Vagina (tissue), 2 donors: ENCODE measurements at regions of chr20 and their contacts with region 1.

Region 1: DNA sequence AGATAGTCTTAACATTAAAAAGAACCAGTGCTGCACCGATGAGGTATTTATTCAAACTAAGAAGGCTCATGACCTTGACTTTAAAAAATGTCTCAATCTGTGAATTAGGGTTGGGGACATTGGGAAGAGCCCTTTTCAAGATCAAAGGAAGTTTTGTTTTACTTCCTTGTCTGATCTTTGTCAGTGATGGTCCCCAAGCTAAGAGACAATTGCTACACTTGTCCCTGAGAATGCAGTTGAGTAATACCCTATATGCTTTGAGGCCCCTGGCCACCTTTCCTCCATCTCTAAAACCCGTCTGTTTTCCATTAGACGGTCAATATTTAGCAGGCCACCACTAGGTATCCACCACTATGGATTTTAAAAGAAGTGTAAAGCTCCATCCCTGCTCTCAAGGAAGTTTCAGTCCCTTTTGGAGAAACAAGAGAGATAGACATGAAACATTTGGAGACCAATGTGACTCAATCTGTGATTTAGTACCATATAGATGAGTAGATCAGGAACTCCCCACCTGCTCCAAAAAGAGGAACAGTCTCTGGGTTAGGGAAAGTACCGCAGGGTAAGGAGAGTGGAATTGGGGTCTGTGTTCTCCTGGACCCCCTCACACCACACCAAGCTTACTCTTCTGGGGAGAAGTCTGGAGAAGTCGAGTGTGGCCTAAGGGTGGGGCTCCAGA is 99.1 kb upstream of the ISM1 start:
- DNase-seq: peak in 1 of 2 donors; percentile 22
- H3K4me3 ChIP-seq: no peak overlapping the region
- H3K27ac ChIP-seq: no peak overlapping the region
- H3K4me1 ChIP-seq: no peaks in the 10 kb centered on the region
- H3K27me3 ChIP-seq: no peaks in the 10 kb centered on the region
- CTCF ChIP-seq: no peak
- POLR2A ChIP-seq: no peak

Region 2: GRCh38 chr20:13765299-13765698 is 643.3 kb after region 1 on chr20:
- intact Hi-C with region 1: loop called (anchors 10 kb)
- DNase-seq: no peak
- H3K4me3 ChIP-seq: no peak overlapping the region
- H3K27ac ChIP-seq: no peak overlapping the region
- H3K4me1 ChIP-seq: no peaks in the 10 kb centered on the region
- H3K27me3 ChIP-seq: no peaks in the 10 kb centered on the region
- CTCF ChIP-seq: no peak
- POLR2A ChIP-seq: no peak